HepG2 (cell line): ENCODE measurements at regions of chr17 and their contacts with region 1.

Region 1: GRCh38 chr17:49031965-49032928 is 35.1 kb downstream of the IGF2BP1 start:
- DNase-seq: peak; percentile 86
- ATAC-seq: peak; percentile 80
- H3K4me3 ChIP-seq: no peak overlapping the region
- H3K27ac ChIP-seq: no peak overlapping the region
- H3K4me1 ChIP-seq: no peaks in the 10 kb centered on the region
- H3K27me3 ChIP-seq: no peaks in the 10 kb centered on the region
- CTCF ChIP-seq: peak; percentile 92
- EP300 ChIP-seq: no peak
- POLR2A ChIP-seq: no peak
- RAD21 ChIP-seq: peak; percentile 98

Region 2: GRCh38 chr17:48804925-48805411 is 227.3 kb before region 1 on chr17:
- CTCF ChIA-PET with region 1: interaction called, 3 read pairs
- POLR2A ChIA-PET with region 1: no interaction called
- in situ Hi-C with region 1: no loop called
- intact Hi-C with region 1: loop called (anchors 10 kb)
- DNase-seq: peak; percentile 63
- ATAC-seq: peak; percentile 94
- H3K4me3 ChIP-seq: peak overlapping the region in 2 of 3 experiments; percentile 41 to 61; a peak in 4 of 6 replicates
- H3K27ac ChIP-seq: no peak overlapping the region
- H3K4me1 ChIP-seq: peaks cover 63% of the 10 kb centered on the region
- H3K27me3 ChIP-seq: peaks cover 0 to 6% of the 10 kb centered on the region in 2 experiments; a peak in 4 of 5 replicates
- CTCF ChIP-seq: peak; percentile 95
- EP300 ChIP-seq: no peak
- POLR2A ChIP-seq: no peak
- RAD21 ChIP-seq: peak; percentile 97

Region 3: GRCh38 chr17:48928876-48929811 is 103.1 kb before region 1 on chr17:
- CTCF ChIA-PET with region 1: interaction called, 6 read pairs
- POLR2A ChIA-PET with region 1: interaction called, 11 read pairs
- in situ Hi-C with region 1: no loop called
- intact Hi-C with region 1: no loop called
- DNase-seq: no peak
- ATAC-seq: no peak; the same call in 2 of the 3 replicates
- H3K4me3 ChIP-seq: no peak overlapping the region
- H3K27ac ChIP-seq: no peak overlapping the region
- H3K4me1 ChIP-seq: peaks cover 21% of the 10 kb centered on the region
- H3K27me3 ChIP-seq: no peaks in the 10 kb centered on the region
- CTCF ChIP-seq: no peak
- EP300 ChIP-seq: no peak
- POLR2A ChIP-seq: peak; percentile 15 to 36; a peak in 2 of 4 replicates
- RAD21 ChIP-seq: no peak

Region 4: GRCh38 chr17:48954300-48954755 is 77.9 kb before region 1 on chr17:
- CTCF ChIA-PET with region 1: interaction called, 63 read pairs
- POLR2A ChIA-PET with region 1: interaction called, 5 read pairs
- in situ Hi-C with region 1: no loop called
- intact Hi-C with region 1: loop called (anchors 1 kb)
- DNase-seq: peak; percentile 79
- ATAC-seq: peak; percentile 96
- H3K4me3 ChIP-seq: peak overlapping the region in 2 of 3 experiments; percentile 1 to 61; a peak in 3 of 6 replicates
- H3K27ac ChIP-seq: no peak overlapping the region
- H3K4me1 ChIP-seq: peaks cover 38% of the 10 kb centered on the region
- H3K27me3 ChIP-seq: no peaks in the 10 kb centered on the region
- CTCF ChIP-seq: peak; percentile 96
- EP300 ChIP-seq: no peak
- POLR2A ChIP-seq: no peak
- RAD21 ChIP-seq: peak; percentile 99

Region 5: DNA sequence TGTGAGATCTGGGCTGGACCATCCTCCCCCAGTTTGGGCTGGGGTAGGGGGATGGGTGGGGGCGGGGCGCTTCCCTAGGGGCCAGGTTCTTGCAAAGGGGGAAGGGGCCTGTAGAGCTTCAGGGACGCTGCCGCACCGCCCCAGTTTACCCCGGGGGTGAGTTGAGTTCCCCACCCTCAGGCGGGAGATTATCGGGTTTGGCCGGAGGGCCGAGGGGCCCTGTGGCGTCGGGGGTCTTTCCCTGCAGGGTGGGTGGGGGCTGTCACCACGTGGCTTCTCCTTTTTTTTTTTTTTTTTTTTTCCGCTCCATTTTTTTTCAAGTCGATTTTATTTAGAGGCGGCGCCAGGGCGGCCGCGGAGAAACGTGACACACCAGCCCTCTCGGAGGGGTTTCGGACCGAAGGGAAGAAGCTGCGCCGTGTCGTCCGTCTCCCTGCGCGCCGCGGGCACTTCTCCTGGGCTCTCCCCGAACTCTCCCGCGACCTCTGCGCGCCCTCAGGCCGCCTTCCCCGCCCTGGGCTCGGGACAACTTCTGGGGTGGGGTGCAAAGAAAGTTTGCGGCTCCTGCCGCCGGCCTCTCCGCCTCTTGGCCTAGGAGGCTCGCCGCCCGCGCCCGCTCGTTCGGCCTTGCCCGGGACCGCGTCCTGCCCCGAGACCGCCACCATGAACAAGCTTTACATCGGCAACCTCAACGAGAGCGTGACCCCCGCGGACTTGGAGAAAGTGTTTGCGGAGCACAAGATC is 35.0 kb before region 1 on chr17 and contains the start of gene IGF2BP1:
- CTCF ChIA-PET with region 1: interaction called, 4 read pairs
- POLR2A ChIA-PET with region 1: interaction called, 17 read pairs
- in situ Hi-C with region 1: no loop called
- intact Hi-C with region 1: loop called (anchors 2 kb)
- DNase-seq: peak; percentile 81
- ATAC-seq: peak; percentile 39
- H3K4me3 ChIP-seq: peak within 1 kb of the TSS; percentile 87 to 97 (median 90)
- H3K27ac ChIP-seq: peak within 1 kb of the TSS; percentile 95
- H3K4me1 ChIP-seq: peaks cover 24% of the 10 kb centered on the region
- H3K27me3 ChIP-seq: peaks cover 0 to 3% of the 10 kb centered on the region in 2 experiments; a peak in 1 of 5 replicates
- CTCF ChIP-seq: 0 out of 2 replicates have a peak, but pooled peaks have one; percentile 2
- EP300 ChIP-seq: peak in 1 of 2 experiments; percentile 5; a peak in 1 of 4 replicates
- POLR2A ChIP-seq: peak; percentile 57 to 70
- RAD21 ChIP-seq: peak; percentile 26
- total RNA-seq, gene IGF2BP1: 75.1 and 116 TPM in 2 replicates

Region 6: DNA sequence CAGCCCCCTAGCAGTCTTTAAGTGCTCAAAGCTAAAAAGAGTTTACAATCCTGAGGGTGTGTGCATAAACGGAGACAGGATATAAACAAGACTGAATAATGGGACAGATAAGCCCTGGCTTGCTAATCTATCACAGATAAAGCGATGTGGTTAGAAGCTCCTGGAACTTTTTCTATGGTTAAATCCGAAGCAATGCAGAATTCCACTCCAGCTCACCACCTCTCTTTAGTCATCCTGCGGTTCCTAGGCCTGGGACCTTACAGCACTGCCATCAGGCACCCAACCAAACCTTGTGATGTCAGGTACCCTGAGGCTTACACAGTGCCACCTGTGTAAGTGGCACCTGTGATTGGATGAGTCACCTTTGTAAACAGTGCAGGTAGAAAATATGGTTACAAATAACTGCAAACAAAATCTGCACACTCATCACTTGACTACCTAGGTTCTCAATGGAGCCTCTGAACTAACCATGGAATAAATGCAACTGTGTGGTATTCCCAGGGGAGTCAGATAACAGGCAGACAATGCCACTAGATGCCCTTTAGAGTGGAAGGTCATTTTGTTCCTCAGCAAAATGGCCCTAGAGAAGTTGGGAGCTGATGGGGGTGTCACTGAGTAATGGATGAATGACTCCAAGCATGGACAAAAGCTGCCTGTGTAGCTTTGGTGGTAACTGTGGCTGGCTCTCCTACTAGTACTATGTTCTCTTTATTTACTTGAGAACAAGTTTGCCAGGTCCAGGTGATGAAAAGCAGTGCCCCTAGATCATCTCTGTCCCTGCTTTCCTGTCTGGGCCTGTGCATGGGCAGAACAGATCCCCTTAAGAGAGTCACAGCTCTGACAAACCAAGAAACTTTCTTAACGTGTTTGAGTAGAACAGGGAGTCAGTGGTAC is 69.1 kb after region 1 on chr17:
- CTCF ChIA-PET with region 1: no interaction called
- POLR2A ChIA-PET with region 1: no interaction called
- in situ Hi-C with region 1: no loop called
- intact Hi-C with region 1: no loop called
- DNase-seq: no peak
- ATAC-seq: peak; percentile 43; the same call in 2 of the 3 replicates
- H3K4me3 ChIP-seq: no peak overlapping the region
- H3K27ac ChIP-seq: no peak overlapping the region
- H3K4me1 ChIP-seq: peaks cover 56% of the 10 kb centered on the region
- H3K27me3 ChIP-seq: no peaks in the 10 kb centered on the region
- CTCF ChIP-seq: no peak
- EP300 ChIP-seq: no peak
- POLR2A ChIP-seq: no peak
- RAD21 ChIP-seq: no peak